A673 (cell line): ENCODE measurements at regions of chr11 and their contacts with region 1.

Region 1: DNA sequence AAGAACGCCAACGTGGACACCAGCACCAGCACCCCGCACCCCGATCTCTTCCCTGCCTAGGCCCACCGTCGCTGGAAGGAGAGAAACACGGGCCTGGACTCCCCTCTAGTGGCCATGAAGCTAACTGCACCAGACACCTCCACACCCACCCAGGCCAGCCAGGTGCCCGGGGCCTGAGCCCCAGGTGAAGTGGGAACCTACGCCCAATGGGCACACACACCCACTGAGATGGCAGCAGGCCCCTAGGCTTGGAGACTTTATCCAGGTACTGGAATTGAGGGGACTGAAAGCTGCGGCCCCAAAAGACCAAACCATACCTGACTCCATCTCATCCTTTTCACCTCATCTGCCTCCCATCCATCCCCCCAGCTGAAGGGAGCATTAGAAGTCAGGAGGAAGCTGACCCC is 81.0 kb downstream of the BUD13 start:
- DNase-seq: peak; percentile 61
- H3K4me3 ChIP-seq: no peak overlapping the region
- H3K27ac ChIP-seq: no peak overlapping the region
- H3K4me1 ChIP-seq: no peaks in the 10 kb centered on the region
- H3K27me3 ChIP-seq: peaks cover 12% of the 10 kb centered on the region
- CTCF ChIP-seq: peak; percentile 95

Region 2: GRCh38 chr11:116217006-116217405 is 474.8 kb before region 1 on chr11:
- CTCF ChIA-PET with region 1: no interaction called
- POLR2A ChIA-PET with region 1: no interaction called
- intact Hi-C with region 1: loop called (anchors 5 kb)
- DNase-seq: peak; percentile 45
- H3K4me3 ChIP-seq: no peak overlapping the region
- H3K27ac ChIP-seq: no peak overlapping the region
- H3K4me1 ChIP-seq: no peaks in the 10 kb centered on the region
- H3K27me3 ChIP-seq: no peaks in the 10 kb centered on the region
- CTCF ChIP-seq: peak; percentile 67

Region 3: GRCh38 chr11:116454020-116454645 is 237.6 kb before region 1 on chr11:
- CTCF ChIA-PET with region 1: no interaction called
- POLR2A ChIA-PET with region 1: no interaction called
- intact Hi-C with region 1: loop called (anchors 1 kb)
- DNase-seq: peak; percentile 70
- H3K4me3 ChIP-seq: no peak overlapping the region
- H3K27ac ChIP-seq: no peak overlapping the region
- H3K4me1 ChIP-seq: no peaks in the 10 kb centered on the region
- H3K27me3 ChIP-seq: no peaks in the 10 kb centered on the region
- CTCF ChIP-seq: peak; percentile 74

Region 4: DNA sequence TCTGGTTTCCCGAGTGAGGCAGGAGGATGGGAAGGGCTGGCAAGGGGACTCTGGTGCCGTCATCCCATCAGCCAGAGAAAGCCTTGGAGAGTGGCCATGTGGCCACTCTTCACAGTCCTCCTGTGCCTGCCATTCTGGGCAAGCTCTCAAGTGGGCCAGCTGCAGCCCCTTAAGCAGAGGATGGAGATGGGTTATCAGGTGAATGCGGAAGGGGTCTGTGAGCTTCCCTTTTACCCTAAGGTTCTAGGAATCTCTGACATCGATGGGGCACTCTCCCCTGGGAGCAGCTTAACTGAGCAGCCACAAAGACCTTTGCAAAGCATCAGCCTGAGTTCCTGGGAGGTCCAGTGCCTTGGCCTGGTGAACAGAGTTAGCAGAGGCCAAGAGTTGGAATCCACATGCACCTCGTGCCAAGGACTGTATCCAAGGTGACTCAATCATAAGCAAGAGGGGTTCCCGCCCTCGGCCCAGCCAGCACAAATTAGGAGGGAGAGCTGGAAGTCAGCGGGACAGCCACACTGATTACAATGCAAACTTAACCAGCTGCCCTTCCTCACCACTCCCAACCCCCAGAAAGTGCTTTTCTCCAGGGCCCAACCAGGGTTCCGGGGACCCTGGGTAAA is 112.6 kb before region 1 on chr11:
- CTCF ChIA-PET with region 1: interaction called, 13 read pairs
- POLR2A ChIA-PET with region 1: no interaction called
- intact Hi-C with region 1: no loop called
- DNase-seq: no peak
- H3K4me3 ChIP-seq: no peak overlapping the region
- H3K27ac ChIP-seq: no peak overlapping the region
- H3K4me1 ChIP-seq: no peaks in the 10 kb centered on the region
- H3K27me3 ChIP-seq: peaks cover 78% of the 10 kb centered on the region
- CTCF ChIP-seq: no peak

Region 5: DNA sequence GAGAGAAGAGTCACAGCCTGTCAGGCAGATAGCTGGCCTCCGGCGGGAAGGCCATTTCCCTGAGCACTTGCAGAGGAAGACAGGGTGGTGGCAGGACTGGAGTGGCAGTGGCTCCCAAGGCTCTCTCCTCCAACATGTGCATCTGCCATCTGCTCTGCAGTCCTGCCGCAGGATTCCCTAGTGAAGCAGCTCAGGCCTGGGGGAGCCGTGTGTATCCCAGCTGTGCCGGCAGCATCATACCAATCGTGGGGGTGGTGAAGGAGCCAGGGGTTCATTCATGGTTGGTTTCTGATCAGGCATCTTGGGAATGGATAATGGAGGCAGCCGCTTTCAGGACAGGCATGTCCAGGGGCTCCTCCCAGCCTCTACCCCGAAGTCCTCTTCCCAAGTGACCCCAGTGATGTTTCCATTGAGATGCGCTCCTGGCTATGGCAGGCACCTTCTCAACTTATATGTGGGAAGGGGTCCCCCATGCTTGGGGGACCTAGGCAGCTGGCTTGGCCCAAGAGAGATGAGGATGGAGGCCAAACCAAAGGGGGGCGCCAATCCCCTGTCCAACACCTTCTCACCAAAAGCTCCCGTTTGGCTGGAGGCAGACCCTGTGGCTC is 513.5 kb after region 1 on chr11:
- CTCF ChIA-PET with region 1: no interaction called
- POLR2A ChIA-PET with region 1: no interaction called
- intact Hi-C with region 1: no loop called
- DNase-seq: no peak
- H3K4me3 ChIP-seq: no peak overlapping the region
- H3K27ac ChIP-seq: no peak overlapping the region
- H3K4me1 ChIP-seq: no peaks in the 10 kb centered on the region
- H3K27me3 ChIP-seq: no peaks in the 10 kb centered on the region
- CTCF ChIP-seq: no peak